Activated CD4-positive, alpha-beta T cell treated with anti-CD3 and anti-CD28 coated beads, Interleukin-2, amount 10 ng/mL, durations not matched to agents 24 days and 14 days (primary cell): ENCODE measurements at regions of chr2 and their contacts with region 1.

Region 1: DNA sequence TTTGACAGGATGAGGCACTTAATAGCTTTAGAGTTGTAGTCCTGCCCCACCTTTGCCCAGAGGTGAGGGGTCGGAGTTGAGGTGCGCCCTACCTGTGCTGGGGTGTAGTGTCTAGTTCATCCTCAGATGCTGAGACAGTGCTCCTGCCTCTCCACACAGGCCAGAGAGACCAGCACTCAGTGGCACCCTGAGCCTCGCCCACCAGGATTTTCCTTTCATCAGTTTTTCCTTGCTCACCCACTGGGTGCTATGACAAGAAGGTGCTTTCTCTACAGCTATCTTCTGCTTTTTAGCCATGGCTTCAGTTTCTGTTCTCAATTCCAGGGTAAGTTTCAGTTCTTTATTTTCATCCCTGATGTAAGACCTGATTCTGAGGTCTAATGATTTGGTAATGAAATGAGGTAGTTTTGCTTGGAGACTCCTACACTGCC is 16.8 kb upstream of the TMEM131 start:
- DNase-seq: peak; percentile 68
- H3K4me3 Mint-ChIP-seq: no peak overlapping the region
- H3K27ac Mint-ChIP-seq: peak overlapping the region; percentile 77
- H3K4me1 Mint-ChIP-seq: peaks cover 35% of the 10 kb centered on the region
- H3K27me3 Mint-ChIP-seq: no peaks in the 10 kb centered on the region

Region 2: DNA sequence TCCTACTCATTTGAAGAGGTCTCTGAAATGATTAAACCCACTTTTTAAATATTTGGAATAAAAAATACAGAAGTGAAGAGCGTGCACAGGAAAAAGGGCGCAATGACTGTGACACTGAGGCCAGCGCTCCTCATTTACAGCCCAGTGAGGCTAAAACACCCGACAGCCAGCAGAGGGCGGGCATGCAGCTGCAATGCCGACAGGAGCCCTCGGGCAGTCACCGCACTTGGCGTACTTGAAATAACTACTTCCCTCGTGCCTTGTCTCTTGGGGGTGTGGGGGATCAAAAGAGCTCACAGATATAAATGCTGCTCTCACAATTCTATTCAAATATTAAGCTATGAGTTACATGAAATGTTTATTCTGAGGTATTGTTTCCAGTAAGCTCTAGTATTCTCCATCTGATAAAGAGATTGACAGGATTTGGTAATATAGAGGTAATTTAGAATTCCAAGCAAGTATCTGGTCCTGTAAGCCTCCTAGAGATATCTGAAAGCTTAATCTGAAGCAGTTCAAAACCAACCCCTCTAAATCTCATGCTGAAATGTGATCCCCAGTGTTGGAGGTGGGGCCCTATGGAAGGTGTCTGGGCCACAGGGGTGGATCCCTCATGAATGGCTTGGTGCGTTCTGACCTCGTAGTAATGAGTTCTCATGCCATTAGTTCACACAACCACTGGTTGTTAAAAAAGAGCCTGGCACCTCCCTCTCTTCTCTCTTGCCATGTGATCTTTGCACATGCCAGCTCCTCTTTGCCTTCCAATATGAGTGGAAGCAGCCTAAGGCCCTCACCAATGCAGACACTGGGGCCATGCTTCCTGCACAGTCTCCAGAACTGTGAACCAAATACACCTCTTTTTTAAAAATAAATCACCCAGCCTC is 205.6 kb before region 1 on chr2:
- intact Hi-C with region 1: loop called (anchors 5 kb)
- DNase-seq: peak; percentile 92
- H3K4me3 Mint-ChIP-seq: no peak overlapping the region
- H3K27ac Mint-ChIP-seq: no peak overlapping the region
- H3K4me1 Mint-ChIP-seq: no peaks in the 10 kb centered on the region
- H3K27me3 Mint-ChIP-seq: no peaks in the 10 kb centered on the region

Region 3: DNA sequence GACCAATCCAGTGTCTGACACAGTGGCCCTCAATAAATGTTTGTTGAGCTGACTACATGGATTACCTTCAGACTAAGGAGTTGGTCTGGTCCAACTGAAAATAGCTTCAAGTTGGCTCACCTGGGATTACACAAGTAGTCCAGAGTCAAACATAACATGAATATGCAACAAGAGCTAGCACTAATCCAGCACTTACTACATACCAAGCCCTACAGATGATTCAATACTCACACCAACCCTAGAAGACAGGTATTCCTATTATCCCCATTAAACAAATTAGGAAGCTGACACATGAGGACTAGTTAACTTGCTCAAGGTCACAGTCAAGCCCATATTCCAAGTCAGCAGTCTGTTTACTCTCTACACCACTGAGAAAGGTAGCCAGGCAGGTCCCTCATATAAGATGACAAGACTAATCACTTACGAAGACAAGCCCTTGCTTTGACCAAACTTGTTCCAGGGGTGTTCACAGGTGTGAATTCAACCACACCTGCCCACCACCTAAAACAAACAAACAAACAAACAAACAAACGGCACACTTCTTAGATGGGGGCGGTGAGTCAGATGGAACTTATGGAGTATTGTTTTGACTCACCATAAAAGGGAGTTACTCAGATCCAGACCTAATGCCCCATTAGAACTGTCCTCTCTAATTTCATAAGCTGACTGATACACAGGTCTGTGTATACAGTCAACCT is 45.9 kb before region 1 on chr2:
- intact Hi-C with region 1: loop called (anchors 2 kb)
- DNase-seq: no peak
- H3K4me3 Mint-ChIP-seq: no peak overlapping the region
- H3K27ac Mint-ChIP-seq: no peak overlapping the region
- H3K4me1 Mint-ChIP-seq: peaks cover 38% of the 10 kb centered on the region
- H3K27me3 Mint-ChIP-seq: no peaks in the 10 kb centered on the region

Region 4: DNA sequence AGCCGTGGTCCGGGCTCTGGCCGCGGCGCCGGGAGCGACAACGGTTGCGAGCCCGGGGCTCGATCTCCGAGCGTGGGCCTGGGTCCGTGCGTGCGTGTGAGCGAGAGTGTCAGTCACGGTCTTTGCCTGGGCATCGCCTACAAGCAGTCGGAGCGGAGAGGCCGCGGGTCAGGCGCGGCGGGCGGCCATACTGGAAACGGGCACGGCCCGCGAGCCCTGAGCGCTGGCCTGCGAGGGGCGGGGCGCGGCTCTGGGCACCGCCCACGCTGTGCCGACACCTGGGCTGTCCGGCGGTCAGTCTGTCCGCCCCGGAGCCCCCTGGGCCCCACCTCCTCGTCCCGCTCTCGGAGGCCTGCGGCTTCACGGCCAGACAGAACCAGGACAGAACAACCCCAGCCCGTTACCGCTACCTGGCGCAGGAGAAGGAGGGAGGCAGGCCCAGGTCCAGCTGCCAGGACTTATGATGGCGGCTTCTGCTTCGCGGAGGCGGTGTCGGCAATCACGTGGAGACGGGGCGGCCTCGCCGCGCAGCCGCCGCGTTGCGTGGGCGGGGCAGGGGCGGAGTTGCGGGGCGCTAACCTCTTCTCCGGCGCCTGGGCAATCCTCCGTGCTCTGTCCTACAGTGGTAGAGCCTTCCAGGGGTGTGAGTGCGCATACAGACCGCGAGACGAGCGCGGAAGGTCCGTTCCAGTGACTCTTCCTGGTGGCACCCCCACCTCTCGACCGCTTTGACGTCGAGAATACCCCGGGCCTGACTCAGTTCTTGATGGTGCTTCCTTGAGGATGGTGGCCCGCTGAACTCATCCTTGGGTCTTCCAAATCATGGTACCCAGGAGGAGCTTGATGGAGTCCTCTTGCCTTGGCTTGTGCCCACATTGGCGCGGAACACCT is 16.6 kb before region 1 on chr2 and contains the start of gene TMEM131:
- intact Hi-C with region 1: loop called (anchors 1 kb)
- DNase-seq: peak; percentile 99
- H3K4me3 Mint-ChIP-seq: peak within 1 kb of the TSS; percentile 97
- H3K27ac Mint-ChIP-seq: peak within 1 kb of the TSS; percentile 98
- H3K4me1 Mint-ChIP-seq: peaks cover 29% of the 10 kb centered on the region
- H3K27me3 Mint-ChIP-seq: peaks cover 9% of the 10 kb centered on the region
- total RNA-seq, gene TMEM131: 41.7 and 44.1 TPM in 2 replicates

Region 5: GRCh38 chr2:98050070-98050469 is 37.5 kb after region 1 on chr2:
- intact Hi-C with region 1: no loop called
- DNase-seq: no peak
- H3K4me3 Mint-ChIP-seq: no peak overlapping the region
- H3K27ac Mint-ChIP-seq: no peak overlapping the region
- H3K4me1 Mint-ChIP-seq: no peaks in the 10 kb centered on the region
- H3K27me3 Mint-ChIP-seq: peaks cover 8% of the 10 kb centered on the region

Region 6: GRCh38 chr2:98086491-98087446 is 74.2 kb after region 1 on chr2 and contains the start of gene VWA3B:
- intact Hi-C with region 1: loop called (anchors 5 kb)
- DNase-seq: peak; percentile 91
- H3K4me3 Mint-ChIP-seq: peak within 1 kb of the TSS; percentile 81
- H3K27ac Mint-ChIP-seq: no peak within 1 kb of the TSS
- H3K4me1 Mint-ChIP-seq: peaks cover 22% of the 10 kb centered on the region
- H3K27me3 Mint-ChIP-seq: peaks cover 26% of the 10 kb centered on the region
- total RNA-seq, gene VWA3B: not detected in 2 replicates

Region 7: GRCh38 chr2:98465456-98466226 is 453.1 kb after region 1 on chr2:
- intact Hi-C with region 1: loop called (anchors 10 kb)
- DNase-seq: peak; percentile 93
- H3K4me3 Mint-ChIP-seq: peak overlapping the region; percentile 71
- H3K27ac Mint-ChIP-seq: peak overlapping the region; percentile 89
- H3K4me1 Mint-ChIP-seq: peaks cover 76% of the 10 kb centered on the region
- H3K27me3 Mint-ChIP-seq: no peaks in the 10 kb centered on the region